ENCODE measurements at regions of chr1 and their contacts with region 1.

Region 1: DNA sequence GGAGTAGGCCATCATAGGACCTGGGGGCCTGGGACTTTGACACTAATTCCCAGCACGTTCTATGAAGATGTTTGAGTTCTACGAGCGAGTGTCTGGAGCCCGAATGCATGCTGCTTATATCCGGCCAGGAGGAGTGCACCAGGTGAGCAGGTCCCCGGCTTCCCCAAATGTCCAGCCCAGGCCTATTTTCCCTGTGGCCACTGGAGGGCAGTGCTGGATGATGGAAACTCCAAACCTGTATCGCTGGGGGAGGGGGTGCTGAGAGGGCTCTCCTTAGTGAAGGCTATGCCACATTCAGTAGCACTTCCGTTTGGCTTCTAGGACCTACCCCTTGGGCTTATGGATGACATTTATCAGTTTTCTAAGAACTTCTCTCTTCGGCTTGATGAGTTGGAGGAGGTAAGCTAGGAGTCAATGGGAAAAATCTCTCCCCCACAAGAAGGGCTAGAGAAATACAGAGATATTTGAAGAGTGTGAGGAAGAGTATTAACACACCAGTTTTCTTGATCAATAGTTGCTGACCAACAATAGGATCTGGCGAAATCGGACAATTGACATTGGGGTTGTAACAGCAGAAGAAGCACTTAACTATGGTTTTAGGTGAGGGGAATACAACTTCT is 5.2 kb upstream of the FCER1G start:
- DNase-seq: peak; percentile 68 to 83
- ATAC-seq: peak; percentile 52 to 78 (median 68)
- H3K4me3 ChIP-seq: no peak overlapping the region
- H3K27ac ChIP-seq: peak overlapping the region in 4 of 10 donors; percentile 86 to 100 (median 98)
- H3K4me1 ChIP-seq: peaks cover 6 to 72% (median 45%) of the 10 kb centered on the region in 9 donors
- H3K27me3 ChIP-seq: no peaks in the 10 kb centered on the region
- CTCF ChIP-seq: peak; percentile 76 to 88 (median 86)

Region 2: GRCh38 chr1:161192476-161193465 is 17.1 kb before region 1 on chr1:
- intact Hi-C with region 1: loop called in 1 of 10 experiments (anchors 2 kb)
- DNase-seq: peak in 1 of 2 donors; percentile 78
- ATAC-seq: peak; percentile 17 to 71 (median 60)
- H3K4me3 ChIP-seq: peak overlapping the region in 2 of 10 donors; percentile 0 to 67
- H3K27ac ChIP-seq: peak overlapping the region in 5 of 10 donors; percentile 17 to 100 (median 41)
- H3K4me1 ChIP-seq: peaks cover 8 to 71% (median 49%) of the 10 kb centered on the region in 9 donors
- H3K27me3 ChIP-seq: no peaks in the 10 kb centered on the region
- CTCF ChIP-seq: peak; percentile 78 to 92 (median 89)

Region 3: GRCh38 chr1:161382214-161383019 is 172.5 kb after region 1 on chr1:
- intact Hi-C with region 1: loop called in 4 of 10 experiments (anchors 5 kb)
- DNase-seq: no peak
- ATAC-seq: peak; percentile 72 to 89 (median 84)
- H3K4me3 ChIP-seq: no peak overlapping the region
- H3K27ac ChIP-seq: peak overlapping the region in 4 of 10 donors; percentile 2 to 79 (median 52)
- H3K4me1 ChIP-seq: peaks cover 0 to 40% (median 0%) of the 10 kb centered on the region in 9 donors
- H3K27me3 ChIP-seq: no peaks in the 10 kb centered on the region
- CTCF ChIP-seq: peak; percentile 39 to 81 (median 75)

Measured in heart right ventricle (tissue), 16 donors.